T-cell (primary cell): ENCODE measurements at regions of chr10 and their contacts with region 1.

Region 1: DNA sequence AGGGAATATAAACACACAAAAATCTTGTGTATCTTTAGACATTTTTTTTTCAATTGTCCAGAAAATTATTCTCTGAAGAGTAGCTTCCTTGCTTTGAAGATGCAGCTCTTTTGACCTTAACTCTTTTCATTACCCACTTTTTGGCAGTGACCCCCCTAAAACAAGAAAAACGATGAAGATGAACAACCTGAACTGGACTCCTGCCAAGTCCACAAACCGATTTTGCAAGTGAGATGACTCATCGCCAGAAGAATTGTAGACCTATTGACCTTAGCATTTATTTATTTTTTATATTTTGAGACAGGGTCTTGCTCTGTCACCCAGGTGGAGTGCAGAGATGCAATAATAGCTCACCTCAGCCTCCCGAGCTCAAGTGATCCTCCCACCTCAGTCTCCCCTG is 859.2 kb downstream of the GATA3 start:
- DNase-seq: no peak
- ATAC-seq: no peak
- H3K4me3 ChIP-seq: no peak overlapping the region
- H3K4me3 Mint-ChIP-seq: no peak overlapping the region
- H3K27ac ChIP-seq: no peak overlapping the region
- H3K27ac Mint-ChIP-seq: no peak overlapping the region
- H3K4me1 ChIP-seq: no peaks in the 10 kb centered on the region
- H3K4me1 Mint-ChIP-seq: no peaks in the 10 kb centered on the region
- H3K27me3 ChIP-seq: no peaks in the 10 kb centered on the region
- H3K27me3 Mint-ChIP-seq: no peaks in the 10 kb centered on the region

Region 2: GRCh38 chr10:8102708-8103401 is 810.8 kb before region 1 on chr10:
- CTCF ChIA-PET with region 1: no interaction called
- POLR2A ChIA-PET with region 1: no interaction called
- DNase-seq: peak in 1 of 35 experiments; percentile 15
- ATAC-seq: no peak
- H3K4me3 ChIP-seq: no peak overlapping the region
- H3K4me3 Mint-ChIP-seq: no peak overlapping the region
- H3K27ac ChIP-seq: no peak overlapping the region
- H3K27ac Mint-ChIP-seq: no peak overlapping the region
- H3K4me1 ChIP-seq: peaks cover 0 to 5% of the 10 kb centered on the region in 2 experiments
- H3K4me1 Mint-ChIP-seq: peaks cover 0 to 2% (median 2%) of the 10 kb centered on the region in 3 donors
- H3K27me3 ChIP-seq: no peaks in the 10 kb centered on the region
- H3K27me3 Mint-ChIP-seq: no peaks in the 10 kb centered on the region

Region 3: DNA sequence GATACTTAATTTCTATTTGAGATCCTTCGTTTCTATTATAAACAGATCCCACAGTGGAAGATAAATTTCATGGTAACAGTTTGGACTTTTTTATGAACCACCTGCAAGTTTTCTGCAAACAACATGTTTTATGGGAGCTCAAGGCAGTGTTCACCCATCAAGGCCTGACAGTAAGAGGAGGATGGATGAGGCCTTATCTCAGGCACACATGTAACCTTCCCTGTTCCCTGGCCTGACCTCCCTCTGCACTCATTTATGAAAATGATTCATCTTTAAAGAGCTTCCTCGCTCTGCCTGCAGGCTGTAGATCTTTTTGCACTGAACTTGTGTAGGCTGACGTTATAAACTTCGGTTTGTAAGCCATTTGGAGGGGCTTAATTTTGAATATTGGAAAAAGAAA is 359.1 kb before region 1 on chr10:
- CTCF ChIA-PET with region 1: no interaction called
- POLR2A ChIA-PET with region 1: interaction called in 1 of 2 experiments, 11 read pairs
- DNase-seq: no peak
- ATAC-seq: no peak
- H3K4me3 ChIP-seq: no peak overlapping the region
- H3K4me3 Mint-ChIP-seq: no peak overlapping the region
- H3K27ac ChIP-seq: no peak overlapping the region
- H3K27ac Mint-ChIP-seq: no peak overlapping the region
- H3K4me1 ChIP-seq: no peaks in the 10 kb centered on the region
- H3K4me1 Mint-ChIP-seq: no peaks in the 10 kb centered on the region
- H3K27me3 ChIP-seq: no peaks in the 10 kb centered on the region
- H3K27me3 Mint-ChIP-seq: peaks cover 13 to 26% of the 10 kb centered on the region in 2 donors